HepG2 (cell line): ENCODE measurements at regions of chr4 and their contacts with region 1.

Region 1: DNA sequence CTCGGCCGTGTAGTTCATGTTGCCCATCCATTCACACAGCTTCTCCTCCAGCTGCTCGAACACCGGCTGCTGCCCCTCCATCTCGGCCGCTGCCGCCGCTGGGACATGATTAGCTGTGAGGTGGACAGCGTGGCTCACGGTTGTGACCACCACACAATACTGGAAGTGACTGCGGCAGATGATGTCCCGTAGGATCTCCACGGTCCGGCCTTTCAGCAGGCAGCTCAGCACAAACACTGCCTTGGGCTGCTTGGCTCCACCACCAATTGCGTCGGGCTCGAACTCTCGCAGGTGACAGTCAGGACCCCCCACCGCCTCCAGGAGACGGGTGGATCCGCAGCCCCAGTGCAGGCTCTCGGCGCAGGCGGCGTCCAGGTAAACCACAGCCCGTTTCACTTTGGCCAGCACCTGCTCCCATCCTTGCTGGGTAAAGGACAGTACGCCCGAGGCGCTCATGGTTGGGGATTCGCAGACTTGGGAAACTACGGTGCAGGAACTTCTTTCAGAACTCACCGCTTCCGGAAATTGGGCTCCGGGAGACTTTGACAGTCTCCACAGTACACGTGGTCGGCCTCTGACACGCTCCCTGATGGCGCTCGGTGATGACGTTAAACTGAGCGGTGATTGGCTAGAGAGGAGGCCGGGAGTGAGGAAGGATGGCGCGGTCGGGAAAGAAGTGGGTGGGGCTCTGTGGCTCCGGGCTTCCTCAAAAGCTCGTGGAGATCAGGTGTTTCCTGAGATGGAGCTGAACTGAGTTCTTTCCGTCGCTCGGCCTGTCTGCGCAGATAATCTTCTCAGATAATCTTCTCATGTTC is at the start of gene SCFD2:
- DNase-seq: peak; percentile 96
- ATAC-seq: peak; percentile 97
- H3K4me3 ChIP-seq: peak within 1 kb of the TSS; percentile 83 to 99 (median 95)
- H3K27ac ChIP-seq: peak within 1 kb of the TSS; percentile 57
- H3K4me1 ChIP-seq: peaks cover 38% of the 10 kb centered on the region
- H3K27me3 ChIP-seq: no peaks in the 10 kb centered on the region; a peak in 1 of 5 replicates
- CTCF ChIP-seq: no peak
- EP300 ChIP-seq: 0 out of 4 replicates have a peak, but pooled peaks of 1 of the 2 experiments have one; percentile 21
- POLR2A ChIP-seq: peak; percentile 67 to 76; a peak in 3 of 4 replicates
- RAD21 ChIP-seq: no peak
- total RNA-seq, gene SCFD2: 15.6 and 16.7 TPM in 2 replicates

Region 2: GRCh38 chr4:53189011-53189410 is 176.7 kb before region 1 on chr4:
- CTCF ChIA-PET with region 1: no interaction called
- POLR2A ChIA-PET with region 1: no interaction called
- in situ Hi-C with region 1: no loop called
- intact Hi-C with region 1: loop called (anchors 5 kb)
- DNase-seq: no peak
- ATAC-seq: no peak
- H3K4me3 ChIP-seq: no peak overlapping the region
- H3K27ac ChIP-seq: peak overlapping the region; percentile 80
- H3K4me1 ChIP-seq: peaks cover 46% of the 10 kb centered on the region
- H3K27me3 ChIP-seq: no peaks in the 10 kb centered on the region
- CTCF ChIP-seq: no peak
- EP300 ChIP-seq: no peak
- POLR2A ChIP-seq: no peak
- RAD21 ChIP-seq: no peak

Region 3: GRCh38 chr4:53377319-53378170 is 11.9 kb after region 1 on chr4 and contains the start of gene FIP1L1:
- CTCF ChIA-PET with region 1: no interaction called
- POLR2A ChIA-PET with region 1: interaction called, 12 read pairs
- in situ Hi-C with region 1: no loop called
- intact Hi-C with region 1: no loop called
- DNase-seq: peak; percentile 83
- ATAC-seq: peak; percentile 95
- H3K4me3 ChIP-seq: peak within 1 kb of the TSS; percentile 94 to 99 (median 98)
- H3K27ac ChIP-seq: peak within 1 kb of the TSS; percentile 84
- H3K4me1 ChIP-seq: peaks cover 49% of the 10 kb centered on the region
- H3K27me3 ChIP-seq: no peaks in the 10 kb centered on the region
- CTCF ChIP-seq: 0 out of 2 replicates have a peak, but pooled peaks have one; percentile 6
- EP300 ChIP-seq: no peak
- POLR2A ChIP-seq: peak; percentile 84 to 85
- RAD21 ChIP-seq: no peak; the same call in 1 of the 2 replicates
- total RNA-seq, gene FIP1L1: 58.8 and 69.4 TPM in 2 replicates

Region 4: GRCh38 chr4:53450773-53451172 is 85.1 kb after region 1 on chr4:
- CTCF ChIA-PET with region 1: no interaction called
- POLR2A ChIA-PET with region 1: no interaction called
- in situ Hi-C with region 1: no loop called
- intact Hi-C with region 1: no loop called
- DNase-seq: no peak
- ATAC-seq: no peak
- H3K4me3 ChIP-seq: no peak overlapping the region
- H3K27ac ChIP-seq: no peak overlapping the region
- H3K4me1 ChIP-seq: peaks cover 6% of the 10 kb centered on the region
- H3K27me3 ChIP-seq: no peaks in the 10 kb centered on the region
- CTCF ChIP-seq: no peak
- EP300 ChIP-seq: no peak
- POLR2A ChIP-seq: no peak
- RAD21 ChIP-seq: no peak